ENCODE measurements at regions of chr2 and their contacts with region 1.

Region 1: GRCh38 chr2:100427628-100428258 is 10.3 kb upstream of the CHST10 start:
- DNase-seq: peak; percentile 63
- ATAC-seq: peak; percentile 78

Region 2: GRCh38 chr2:100562732-100563720 is 135.3 kb after region 1 on chr2 and contains the start of gene PDCL3:
- intact Hi-C with region 1: loop called in 1 of 2 experiments (anchors 5 kb)
- DNase-seq: peak; percentile 96
- ATAC-seq: peak; percentile 97 to 98
- total RNA-seq, gene PDCL3: 21.4 to 24.2 TPM